Activated CD8-positive, alpha-beta T cell treated with anti-CD3 and anti-CD28 coated beads for 36 hours (primary cell): ENCODE measurements at regions of chr5 and their contacts with region 1.

Region 1: GRCh38 chr5:1883120-1883924 is 597 bp upstream of the IRX4 start:
- DNase-seq: peak; percentile 30
- ATAC-seq: peak; percentile 54
- H3K4me3 Mint-ChIP-seq: no peak overlapping the region
- H3K27ac Mint-ChIP-seq: no peak overlapping the region
- H3K4me1 Mint-ChIP-seq: peaks cover 6% of the 10 kb centered on the region
- H3K27me3 Mint-ChIP-seq: peaks cover 49% of the 10 kb centered on the region
- CTCF ChIP-seq: peak; percentile 39

Region 2: GRCh38 chr5:1894243-1894642 is 10.9 kb after region 1 on chr5:
- CTCF ChIA-PET with region 1: no interaction called
- POLR2A ChIA-PET with region 1: no interaction called
- intact Hi-C with region 1: loop called (anchors 1 kb)
- DNase-seq: no peak
- ATAC-seq: no peak
- H3K4me3 Mint-ChIP-seq: no peak overlapping the region
- H3K27ac Mint-ChIP-seq: no peak overlapping the region
- H3K4me1 Mint-ChIP-seq: no peaks in the 10 kb centered on the region
- H3K27me3 Mint-ChIP-seq: peaks cover 5% of the 10 kb centered on the region
- CTCF ChIP-seq: no peak

Region 3: GRCh38 chr5:2739360-2740050 is 856.2 kb after region 1 on chr5:
- CTCF ChIA-PET with region 1: no interaction called
- POLR2A ChIA-PET with region 1: no interaction called
- intact Hi-C with region 1: loop called (anchors 10 kb)
- DNase-seq: no peak
- ATAC-seq: no peak
- H3K4me3 Mint-ChIP-seq: no peak overlapping the region
- H3K27ac Mint-ChIP-seq: no peak overlapping the region
- H3K4me1 Mint-ChIP-seq: no peaks in the 10 kb centered on the region
- H3K27me3 Mint-ChIP-seq: peaks cover 47% of the 10 kb centered on the region
- CTCF ChIP-seq: no peak